B cell (primary cell): ENCODE measurements at regions of chr17 and their contacts with region 1.

Region 1: DNA sequence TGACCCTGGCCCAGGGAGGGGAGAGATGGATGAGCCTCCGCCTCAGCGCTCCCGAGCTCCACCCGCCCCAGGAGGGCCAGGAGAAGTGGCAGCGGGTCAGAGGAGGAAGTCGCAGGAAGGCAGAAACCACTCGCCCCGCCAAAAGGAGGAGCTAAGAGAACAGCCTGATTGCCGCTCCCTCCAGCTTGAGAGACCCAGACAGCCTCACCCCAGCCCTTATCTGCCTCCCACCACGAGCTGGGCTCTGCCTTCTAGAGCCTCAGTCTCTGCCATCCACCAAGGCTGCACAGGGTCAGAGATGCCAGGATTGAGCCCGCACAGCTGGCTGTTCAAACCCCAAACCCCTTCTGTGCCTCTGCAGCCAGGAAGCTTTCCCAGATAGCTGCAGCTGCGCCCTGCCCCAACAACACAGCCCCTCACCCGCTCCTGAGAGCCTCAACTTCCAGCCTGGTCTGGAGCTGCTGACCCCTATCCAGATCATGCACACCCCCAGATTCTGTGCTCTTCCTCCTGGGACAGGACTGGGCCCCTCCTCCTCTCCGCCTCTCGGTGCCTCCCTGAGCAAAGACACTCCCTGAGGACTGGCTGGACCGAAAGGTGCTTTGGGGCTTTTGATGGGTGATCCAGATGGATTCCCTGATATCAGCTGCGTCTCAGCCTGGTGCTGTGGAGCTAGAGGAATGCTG is 1.0 kb upstream of the ATP2A3 start:
- DNase-seq: peak; percentile 85
- ATAC-seq: peak; percentile 35
- H3K4me3 ChIP-seq: peak overlapping the region; percentile 13 to 98 (median 86)
- H3K4me3 Mint-ChIP-seq: peak overlapping the region; percentile 94
- H3K27ac ChIP-seq: peak overlapping the region; percentile 83 to 88
- H3K27ac Mint-ChIP-seq: peak overlapping the region; percentile 94
- H3K4me1 ChIP-seq: peaks cover 61 to 77% of the 10 kb centered on the region in 2 donors
- H3K4me1 Mint-ChIP-seq: peaks cover 62% of the 10 kb centered on the region
- H3K27me3 ChIP-seq: no peaks in the 10 kb centered on the region
- H3K27me3 Mint-ChIP-seq: no peaks in the 10 kb centered on the region
- CTCF ChIP-seq: no peak

Region 2: DNA sequence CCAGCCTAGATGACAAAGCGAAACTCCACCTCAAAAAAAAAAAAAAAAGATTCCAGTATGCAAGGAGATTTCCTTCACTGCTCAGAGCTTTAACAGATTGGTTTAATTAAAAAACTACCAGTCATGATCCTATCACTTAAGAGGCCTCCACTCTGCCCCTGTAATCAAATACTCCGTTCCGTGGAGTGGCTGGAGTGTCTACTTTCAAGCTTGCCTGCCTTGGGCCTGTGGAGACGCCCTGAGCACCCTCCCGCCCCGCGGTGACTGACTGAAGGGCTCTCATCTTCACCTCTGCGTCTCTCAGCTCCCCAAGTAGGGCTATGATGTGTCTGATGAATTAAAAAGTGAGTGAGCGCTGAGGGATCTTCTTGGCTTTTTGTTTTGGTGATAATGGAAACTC is 382.3 kb before region 1 on chr17:
- CTCF ChIA-PET with region 1: no interaction called
- POLR2A ChIA-PET with region 1: no interaction called
- intact Hi-C with region 1: no loop called
- DNase-seq: no peak
- ATAC-seq: no peak
- H3K4me3 ChIP-seq: no peak overlapping the region
- H3K4me3 Mint-ChIP-seq: no peak overlapping the region
- H3K27ac ChIP-seq: no peak overlapping the region
- H3K27ac Mint-ChIP-seq: no peak overlapping the region
- H3K4me1 ChIP-seq: no peaks in the 10 kb centered on the region
- H3K4me1 Mint-ChIP-seq: no peaks in the 10 kb centered on the region
- H3K27me3 ChIP-seq: no peaks in the 10 kb centered on the region
- H3K27me3 Mint-ChIP-seq: no peaks in the 10 kb centered on the region
- CTCF ChIP-seq: no peak

Region 3: DNA sequence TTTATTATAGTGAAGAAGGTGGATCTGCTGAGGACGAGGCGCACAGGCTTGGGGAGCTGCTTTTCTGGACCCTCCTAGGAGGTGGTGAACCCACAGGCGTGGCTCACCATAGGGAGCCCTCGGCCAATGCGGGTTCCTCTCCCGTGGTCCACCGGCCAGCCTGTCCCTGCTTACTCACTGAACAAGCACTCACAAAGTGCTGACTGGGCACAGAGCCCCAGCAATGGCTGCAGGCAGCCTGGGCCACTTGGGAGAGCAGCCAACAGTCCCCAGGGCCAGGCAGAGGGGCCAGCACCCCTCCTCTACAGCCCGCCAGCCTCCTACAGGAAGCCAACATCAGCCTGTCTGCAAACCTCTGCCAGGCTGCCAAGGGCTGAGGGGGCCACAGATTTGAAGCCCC is 100.1 kb before region 1 on chr17:
- CTCF ChIA-PET with region 1: interaction called, 19 read pairs
- POLR2A ChIA-PET with region 1: no interaction called
- intact Hi-C with region 1: no loop called
- DNase-seq: no peak
- ATAC-seq: no peak
- H3K4me3 ChIP-seq: no peak overlapping the region
- H3K4me3 Mint-ChIP-seq: no peak overlapping the region
- H3K27ac ChIP-seq: no peak overlapping the region
- H3K27ac Mint-ChIP-seq: no peak overlapping the region
- H3K4me1 ChIP-seq: no peaks in the 10 kb centered on the region
- H3K4me1 Mint-ChIP-seq: no peaks in the 10 kb centered on the region
- H3K27me3 ChIP-seq: no peaks in the 10 kb centered on the region
- H3K27me3 Mint-ChIP-seq: no peaks in the 10 kb centered on the region
- CTCF ChIP-seq: no peak

Region 4: DNA sequence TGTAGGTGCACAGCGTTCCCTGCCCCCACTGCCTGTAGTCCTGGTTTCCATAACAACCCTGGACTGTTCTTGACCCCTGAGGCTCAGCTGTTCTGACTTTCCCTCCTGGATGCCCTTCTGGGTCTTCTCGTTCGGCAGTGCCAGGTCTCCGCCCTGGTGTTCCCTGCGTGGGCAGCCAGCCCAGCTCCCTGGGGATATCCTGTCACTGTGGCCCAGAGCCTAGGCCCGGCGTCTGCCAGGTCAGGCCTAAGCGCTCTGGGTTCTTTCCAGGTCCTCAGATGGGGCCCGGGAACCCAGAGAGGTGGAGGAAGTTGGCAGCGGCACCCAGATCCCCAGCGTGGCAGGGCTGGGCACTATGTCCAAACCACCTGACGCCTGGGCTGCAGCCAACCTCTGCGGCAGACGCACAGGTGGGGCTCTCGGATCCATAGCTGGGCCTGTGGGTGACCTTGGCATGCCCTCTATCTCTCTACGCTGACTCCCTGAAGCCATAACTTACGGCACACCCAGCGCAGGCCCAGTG is 11.4 kb after region 1 on chr17:
- CTCF ChIA-PET with region 1: interaction called, 12 read pairs
- POLR2A ChIA-PET with region 1: interaction called, 3 read pairs
- intact Hi-C with region 1: no loop called
- DNase-seq: no peak
- ATAC-seq: no peak
- H3K4me3 ChIP-seq: no peak overlapping the region
- H3K4me3 Mint-ChIP-seq: no peak overlapping the region
- H3K27ac ChIP-seq: no peak overlapping the region
- H3K27ac Mint-ChIP-seq: no peak overlapping the region
- H3K4me1 ChIP-seq: peaks cover 20 to 30% of the 10 kb centered on the region in 2 donors
- H3K4me1 Mint-ChIP-seq: peaks cover 31% of the 10 kb centered on the region
- H3K27me3 ChIP-seq: no peaks in the 10 kb centered on the region
- H3K27me3 Mint-ChIP-seq: no peaks in the 10 kb centered on the region
- CTCF ChIP-seq: no peak

Region 5: DNA sequence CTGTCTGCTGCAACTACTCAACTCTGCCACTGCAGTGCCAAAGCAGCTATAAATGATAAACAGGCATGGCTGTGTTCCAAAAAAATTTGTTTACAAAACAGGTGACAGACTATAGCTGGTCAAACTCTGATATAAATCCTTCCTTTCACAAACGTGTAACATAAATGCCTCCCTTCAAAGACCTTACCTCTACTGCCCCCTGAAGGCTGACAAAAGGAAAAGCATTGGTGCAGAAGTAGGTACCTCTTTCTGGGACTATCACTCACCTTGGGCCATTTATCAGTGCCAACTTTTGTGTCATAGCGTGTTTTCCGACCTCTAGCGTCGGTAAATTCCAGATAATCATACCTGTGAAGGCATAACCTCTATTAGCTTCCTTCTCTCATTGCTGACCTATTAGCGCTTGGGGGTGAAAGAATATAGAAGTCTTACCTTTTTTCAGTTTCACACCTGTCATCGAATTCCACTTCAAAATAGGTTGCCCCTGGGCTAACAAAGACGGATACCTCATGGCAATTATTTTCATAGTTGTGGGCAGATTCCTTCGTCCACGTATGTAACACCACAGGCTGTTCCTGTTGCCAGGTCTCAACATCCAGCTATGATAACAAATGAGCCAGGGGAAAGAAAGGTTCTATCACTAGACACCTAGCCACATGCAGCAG is 109.7 kb after region 1 on chr17:
- CTCF ChIA-PET with region 1: interaction called, 10 read pairs
- POLR2A ChIA-PET with region 1: no interaction called
- intact Hi-C with region 1: loop called (anchors 1 kb)
- DNase-seq: peak; percentile 75
- ATAC-seq: peak; percentile 53
- H3K4me3 ChIP-seq: no peak overlapping the region
- H3K4me3 Mint-ChIP-seq: peak overlapping the region; percentile 75
- H3K27ac ChIP-seq: peak overlapping the region; percentile 20 to 54
- H3K27ac Mint-ChIP-seq: peak overlapping the region; percentile 76
- H3K4me1 ChIP-seq: peaks cover 13 to 17% of the 10 kb centered on the region in 2 donors
- H3K4me1 Mint-ChIP-seq: peaks cover 18% of the 10 kb centered on the region
- H3K27me3 ChIP-seq: no peaks in the 10 kb centered on the region
- H3K27me3 Mint-ChIP-seq: no peaks in the 10 kb centered on the region
- CTCF ChIP-seq: peak; percentile 78